ENCODE measurements at regions of chr1 and their contacts with region 1.

Region 1: GRCh38 chr1:2561898-2562545 is 5.9 kb downstream of the TNFRSF14 start:
- DNase-seq: no peak
- ATAC-seq: peak; percentile 46
- H3K4me3 Mint-ChIP-seq: no peak overlapping the region
- H3K27ac Mint-ChIP-seq: no peak overlapping the region
- H3K4me1 Mint-ChIP-seq: peaks cover 9% of the 10 kb centered on the region
- H3K27me3 Mint-ChIP-seq: no peaks in the 10 kb centered on the region

Region 2: DNA sequence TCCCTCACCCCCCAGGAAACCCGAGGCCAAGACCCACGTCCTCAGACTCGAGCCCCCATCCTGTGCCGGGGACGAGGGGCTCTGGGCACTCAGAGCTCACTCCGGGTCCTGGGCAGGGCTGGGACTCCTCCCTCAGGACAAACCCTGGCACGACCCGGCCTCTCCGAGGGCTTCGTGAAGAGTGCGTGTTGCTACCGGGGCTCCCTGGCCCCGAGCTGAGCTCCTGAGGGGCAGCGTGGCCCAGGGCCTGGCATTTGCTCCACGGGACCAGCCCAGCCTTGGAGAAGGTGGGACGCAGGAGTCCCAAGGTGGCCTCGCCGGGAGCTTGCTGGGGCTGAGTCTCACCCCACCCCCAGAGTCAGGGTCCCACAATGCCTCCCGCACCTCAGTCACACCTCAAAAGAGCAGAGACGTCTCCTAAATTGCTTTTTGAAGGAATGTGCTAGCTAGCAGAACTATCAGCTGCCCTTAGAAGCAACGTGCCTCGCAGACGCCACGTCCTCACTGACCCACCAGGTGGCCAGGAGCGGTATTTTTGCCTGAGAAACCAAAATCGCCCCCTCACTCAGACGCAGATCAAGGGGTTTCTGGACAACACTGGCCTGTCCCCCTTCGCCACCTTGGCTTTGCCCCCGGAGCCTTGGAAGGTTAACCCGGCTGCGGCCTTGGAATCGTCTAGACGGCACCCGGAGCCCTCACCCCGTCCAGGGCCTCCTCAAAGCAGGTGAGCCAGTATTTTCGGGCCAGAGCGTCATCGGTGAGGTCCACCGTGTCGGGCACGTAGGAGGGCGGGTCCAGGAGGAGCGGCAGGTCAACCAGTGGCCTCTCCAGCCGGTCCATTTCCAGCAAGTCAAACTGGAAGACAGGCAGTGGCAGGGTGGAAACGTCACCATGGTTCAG is 46.9 kb before region 1 on chr1:
- POLR2A ChIA-PET with region 1: no interaction called
- DNase-seq: no peak
- ATAC-seq: no peak
- H3K4me3 Mint-ChIP-seq: no peak overlapping the region
- H3K27ac Mint-ChIP-seq: no peak overlapping the region
- H3K4me1 Mint-ChIP-seq: no peaks in the 10 kb centered on the region
- H3K27me3 Mint-ChIP-seq: no peaks in the 10 kb centered on the region

Region 3: GRCh38 chr1:2575801-2576663 is 14.0 kb after region 1 on chr1:
- POLR2A ChIA-PET with region 1: interaction called, 68 read pairs
- DNase-seq: no peak
- ATAC-seq: no peak
- H3K4me3 Mint-ChIP-seq: no peak overlapping the region
- H3K27ac Mint-ChIP-seq: peak overlapping the region; percentile 67
- H3K4me1 Mint-ChIP-seq: peaks cover 28% of the 10 kb centered on the region
- H3K27me3 Mint-ChIP-seq: no peaks in the 10 kb centered on the region